HepG2 (cell line): ENCODE measurements at regions of chr17 and their contacts with region 1.

Region 1: DNA sequence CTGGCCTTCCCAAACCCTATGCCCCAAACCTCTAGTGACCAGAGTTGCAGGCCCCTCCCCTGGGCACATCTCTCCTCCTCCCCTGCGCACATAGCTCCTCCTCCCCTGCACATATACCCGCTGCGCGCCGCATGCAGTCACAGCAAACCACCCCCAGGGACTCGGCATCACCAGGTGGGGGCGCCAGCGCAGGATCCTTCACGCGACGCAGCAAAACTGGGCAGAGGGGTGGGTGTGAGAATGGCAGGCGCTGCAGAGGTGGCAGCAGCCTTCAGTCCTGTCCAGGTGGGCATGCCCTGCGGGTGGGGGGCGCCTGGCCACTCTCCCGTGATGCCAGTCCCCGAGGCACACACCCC is 5.6 kb downstream of the CORO6 start:
- DNase-seq: peak; percentile 80
- ATAC-seq: peak; percentile 64
- H3K4me3 ChIP-seq: peak overlapping the region; percentile 36 to 75 (median 42); a peak in 5 of 6 replicates
- H3K27ac ChIP-seq: no peak overlapping the region
- H3K4me1 ChIP-seq: peaks cover 75% of the 10 kb centered on the region
- H3K27me3 ChIP-seq: peaks cover 4 to 79% of the 10 kb centered on the region in 2 experiments
- CTCF ChIP-seq: peak; percentile 92
- EP300 ChIP-seq: no peak
- POLR2A ChIP-seq: no peak
- RAD21 ChIP-seq: 0 out of 2 replicates have a peak, but pooled peaks have one; percentile 7

Region 2: GRCh38 chr17:29579866-29580771 is 37.0 kb before region 1 on chr17:
- CTCF ChIA-PET with region 1: interaction called, 13 read pairs
- POLR2A ChIA-PET with region 1: interaction called, 3 read pairs
- in situ Hi-C with region 1: loop called (anchors 5 kb)
- intact Hi-C with region 1: no loop called
- DNase-seq: peak; percentile 64
- ATAC-seq: peak; percentile 86
- H3K4me3 ChIP-seq: no peak overlapping the region
- H3K27ac ChIP-seq: no peak overlapping the region
- H3K4me1 ChIP-seq: peaks cover 20% of the 10 kb centered on the region
- H3K27me3 ChIP-seq: no peaks in the 10 kb centered on the region
- CTCF ChIP-seq: peak; percentile 96
- EP300 ChIP-seq: no peak
- POLR2A ChIP-seq: no peak
- RAD21 ChIP-seq: peak; percentile 92

Region 3: DNA sequence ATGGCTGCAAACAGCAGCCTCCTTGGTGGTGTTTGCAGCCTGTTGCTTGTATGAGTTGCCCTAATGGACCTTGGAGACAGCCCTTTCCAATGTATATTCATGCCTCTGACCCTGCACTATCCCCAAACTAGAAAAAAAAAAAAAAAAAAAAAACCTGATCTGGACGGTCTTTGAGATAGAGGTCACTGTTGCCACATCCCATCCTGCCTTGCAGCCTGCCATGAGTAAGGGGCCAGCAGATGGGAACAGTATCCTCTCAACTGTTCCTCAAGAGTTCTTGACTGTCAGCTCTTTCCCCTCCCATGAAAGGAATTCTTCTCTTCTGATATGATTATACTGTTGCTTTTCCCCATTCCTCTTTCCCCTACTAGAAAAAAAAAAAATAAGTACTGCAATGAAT is 160.6 kb after region 1 on chr17:
- CTCF ChIA-PET with region 1: interaction called, 10 read pairs
- POLR2A ChIA-PET with region 1: interaction called, 3 read pairs
- in situ Hi-C with region 1: loop called (anchors 10 kb)
- intact Hi-C with region 1: no loop called
- DNase-seq: peak; percentile 9
- ATAC-seq: 0 out of 3 replicates have a peak, but pooled peaks have one; percentile 28
- H3K4me3 ChIP-seq: no peak overlapping the region
- H3K27ac ChIP-seq: peak overlapping the region; percentile 24
- H3K4me1 ChIP-seq: peaks cover 10% of the 10 kb centered on the region
- H3K27me3 ChIP-seq: no peaks in the 10 kb centered on the region
- CTCF ChIP-seq: no peak
- EP300 ChIP-seq: no peak
- POLR2A ChIP-seq: no peak
- RAD21 ChIP-seq: no peak